Mammary epithelial cell (primary cell): ENCODE measurements at regions of chr13 and their contacts with region 1.

Region 1: DNA sequence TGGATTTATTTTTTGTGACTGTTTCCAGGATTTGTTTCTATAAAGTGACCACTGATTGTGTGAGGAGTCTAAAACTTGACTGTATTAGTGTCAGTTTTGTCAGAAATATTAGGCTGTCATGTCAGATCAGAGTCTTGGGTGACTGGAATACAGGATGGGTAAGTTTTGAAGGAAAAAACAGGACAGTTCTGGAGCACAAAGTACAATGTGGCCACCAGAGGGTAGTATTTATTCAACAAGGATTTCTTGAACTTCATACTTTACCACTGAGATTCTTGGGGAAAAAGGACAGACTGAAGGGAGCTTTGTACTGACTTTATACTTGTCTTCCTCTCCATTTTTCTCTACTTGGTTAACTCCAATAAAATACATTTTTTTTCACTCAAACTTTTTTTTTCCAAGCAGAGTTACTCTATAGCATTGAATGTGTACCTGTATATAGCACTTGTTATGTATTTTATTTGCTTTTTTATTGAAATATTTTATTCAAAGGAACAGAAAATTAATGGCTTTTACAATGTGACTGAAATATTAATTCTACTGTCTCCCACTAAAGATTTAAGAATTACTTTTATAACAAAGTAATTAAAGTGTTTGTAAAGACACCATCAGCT is 51.1 kb downstream of the LMO7 start:
- DNase-seq: peak; percentile 53
- H3K4me3 ChIP-seq: no peak overlapping the region
- H3K27ac ChIP-seq: no peak overlapping the region
- H3K4me1 ChIP-seq: peaks cover 24% of the 10 kb centered on the region
- H3K27me3 ChIP-seq: no peaks in the 10 kb centered on the region
- CTCF ChIP-seq: peak; percentile 59

Region 2: GRCh38 chr13:75675421-75675820 is 11.8 kb before region 1 on chr13:
- CTCF ChIA-PET with region 1: interaction called, 5 read pairs
- dilution Hi-C with region 1: no loop called
- in situ Hi-C with region 1: no loop called
- intact Hi-C with region 1: loop called (anchors 1 kb)
- DNase-seq: peak; percentile 17
- H3K4me3 ChIP-seq: peak overlapping the region in 2 of 3 experiments; percentile 6 to 94
- H3K27ac ChIP-seq: peak overlapping the region; percentile 84
- H3K4me1 ChIP-seq: peaks cover 4% of the 10 kb centered on the region
- H3K27me3 ChIP-seq: no peaks in the 10 kb centered on the region
- CTCF ChIP-seq: no peak

Region 3: GRCh38 chr13:75864718-75865117 is 177.5 kb after region 1 on chr13:
- CTCF ChIA-PET with region 1: interaction called, 3 read pairs
- dilution Hi-C with region 1: loop called (anchors 10 kb)
- in situ Hi-C with region 1: loop called in 1 of 2 experiments (anchors 10 kb)
- intact Hi-C with region 1: no loop called
- DNase-seq: peak; percentile 69
- H3K4me3 ChIP-seq: no peak overlapping the region
- H3K27ac ChIP-seq: no peak overlapping the region
- H3K4me1 ChIP-seq: no peaks in the 10 kb centered on the region
- H3K27me3 ChIP-seq: no peaks in the 10 kb centered on the region
- CTCF ChIP-seq: no peak

Region 4: DNA sequence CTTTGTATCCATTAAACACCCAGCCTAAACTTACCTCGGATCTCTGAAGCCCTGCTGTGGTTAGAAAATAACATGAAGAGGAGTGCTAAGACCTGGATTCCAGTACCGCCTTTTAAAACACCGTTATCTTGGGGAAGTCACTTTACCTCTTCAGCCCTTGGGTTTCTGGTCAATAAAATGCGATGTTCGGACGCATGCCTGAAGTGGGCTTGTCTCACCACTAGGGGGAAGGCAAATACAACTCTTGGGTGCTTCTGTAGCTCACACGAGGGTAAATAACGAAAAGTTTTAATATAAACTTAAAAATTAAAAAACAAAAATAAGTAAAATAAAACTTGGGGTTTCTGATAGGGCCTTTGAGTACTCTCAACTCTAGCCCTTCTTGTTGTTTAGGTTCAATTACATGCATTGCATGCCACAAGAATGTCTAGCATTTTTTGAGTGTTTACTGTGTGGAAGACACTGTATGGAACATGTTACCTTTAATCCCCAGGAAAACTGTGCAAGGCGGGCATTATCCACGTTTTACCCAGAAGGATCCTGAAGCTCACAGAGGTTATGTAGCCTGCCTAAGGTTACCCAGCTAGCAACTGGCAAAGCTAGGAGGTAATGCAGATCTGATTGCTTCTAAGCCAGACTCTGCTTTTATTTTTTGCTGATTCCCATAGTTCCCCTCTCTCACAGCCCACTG is 189.2 kb after region 1 on chr13:
- CTCF ChIA-PET with region 1: no interaction called
- dilution Hi-C with region 1: no loop called
- in situ Hi-C with region 1: loop called in 1 of 2 experiments (anchors 10 kb)
- intact Hi-C with region 1: loop called (anchors 2 kb)
- DNase-seq: peak; percentile 53
- H3K4me3 ChIP-seq: no peak overlapping the region
- H3K27ac ChIP-seq: no peak overlapping the region
- H3K4me1 ChIP-seq: no peaks in the 10 kb centered on the region
- H3K27me3 ChIP-seq: peaks cover 1% of the 10 kb centered on the region
- CTCF ChIP-seq: peak; percentile 96 to 97

Region 5: GRCh38 chr13:76473552-76474134 is 786.4 kb after region 1 on chr13:
- CTCF ChIA-PET with region 1: no interaction called
- dilution Hi-C with region 1: no loop called
- in situ Hi-C with region 1: loop called (anchors 10 to 25 kb)
- intact Hi-C with region 1: loop called (anchors 2 kb)
- DNase-seq: peak; percentile 57
- H3K4me3 ChIP-seq: no peak overlapping the region
- H3K27ac ChIP-seq: no peak overlapping the region
- H3K4me1 ChIP-seq: no peaks in the 10 kb centered on the region
- H3K27me3 ChIP-seq: peaks cover 2% of the 10 kb centered on the region
- CTCF ChIP-seq: peak; percentile 71 to 81